MCF 10A (cell line): ENCODE measurements at regions of chr19 and their contacts with region 1.

Region 1: GRCh38 chr19:24086974-24087595 is at the start of gene ZNF254:
- DNase-seq: peak; percentile 87
- H3K4me3 Mint-ChIP-seq: peak within 1 kb of the TSS; percentile 80
- H3K27ac Mint-ChIP-seq: peak within 1 kb of the TSS; percentile 97
- H3K4me1 Mint-ChIP-seq: no peaks in the 10 kb centered on the region
- H3K27me3 Mint-ChIP-seq: no peaks in the 10 kb centered on the region
- CTCF ChIP-seq: no peak
- total RNA-seq, gene ZNF254: 5.3 and 5.6 TPM in 2 replicates

Region 2: DNA sequence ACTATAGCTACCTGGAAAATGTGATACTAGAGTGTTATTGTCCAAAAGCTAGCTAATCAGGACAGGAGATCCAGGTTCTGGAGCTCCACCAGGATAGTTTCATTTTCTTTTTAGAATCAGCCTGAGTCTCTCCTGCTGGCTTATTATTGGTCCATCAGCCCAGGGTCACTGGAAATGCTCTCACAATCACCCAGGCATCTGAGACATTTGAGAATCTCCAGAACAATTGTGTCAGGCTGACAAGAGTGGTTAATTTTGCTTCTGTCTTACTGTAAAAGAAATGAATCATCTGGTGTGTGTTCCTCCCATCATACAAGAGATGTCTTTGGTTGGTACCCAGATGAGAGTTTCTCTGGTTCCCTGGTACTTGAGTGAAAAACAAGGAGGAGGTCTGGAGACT is 284.8 kb before region 1 on chr19:
- CTCF ChIA-PET with region 1: no interaction called
- POLR2A ChIA-PET with region 1: no interaction called
- intact Hi-C with region 1: no loop called
- DNase-seq: no peak
- H3K4me3 Mint-ChIP-seq: no peak overlapping the region
- H3K27ac Mint-ChIP-seq: no peak overlapping the region
- H3K4me1 Mint-ChIP-seq: no peaks in the 10 kb centered on the region
- H3K27me3 Mint-ChIP-seq: no peaks in the 10 kb centered on the region
- CTCF ChIP-seq: no peak

Region 3: GRCh38 chr19:23917856-23918255 is 169.2 kb before region 1 on chr19:
- CTCF ChIA-PET with region 1: no interaction called
- POLR2A ChIA-PET with region 1: no interaction called
- intact Hi-C with region 1: no loop called
- DNase-seq: no peak
- H3K4me3 Mint-ChIP-seq: no peak overlapping the region
- H3K27ac Mint-ChIP-seq: peak overlapping the region; percentile 37
- H3K4me1 Mint-ChIP-seq: no peaks in the 10 kb centered on the region
- H3K27me3 Mint-ChIP-seq: no peaks in the 10 kb centered on the region
- CTCF ChIP-seq: no peak

Region 4: GRCh38 chr19:23932878-23933277 is 154.2 kb before region 1 on chr19:
- CTCF ChIA-PET with region 1: no interaction called
- POLR2A ChIA-PET with region 1: no interaction called
- intact Hi-C with region 1: no loop called
- DNase-seq: no peak
- H3K4me3 Mint-ChIP-seq: no peak overlapping the region
- H3K27ac Mint-ChIP-seq: no peak overlapping the region
- H3K4me1 Mint-ChIP-seq: no peaks in the 10 kb centered on the region
- H3K27me3 Mint-ChIP-seq: no peaks in the 10 kb centered on the region
- CTCF ChIP-seq: no peak

Region 5: GRCh38 chr19:24098359-24098758 is 11.3 kb after region 1 on chr19:
- CTCF ChIA-PET with region 1: interaction called, 4 read pairs
- POLR2A ChIA-PET with region 1: interaction called, 12 read pairs
- intact Hi-C with region 1: no loop called
- DNase-seq: no peak
- H3K4me3 Mint-ChIP-seq: no peak overlapping the region
- H3K27ac Mint-ChIP-seq: no peak overlapping the region
- H3K4me1 Mint-ChIP-seq: no peaks in the 10 kb centered on the region
- H3K27me3 Mint-ChIP-seq: no peaks in the 10 kb centered on the region
- CTCF ChIP-seq: no peak